ENCODE measurements at regions of chr6 and their contacts with region 1.

Region 1: DNA sequence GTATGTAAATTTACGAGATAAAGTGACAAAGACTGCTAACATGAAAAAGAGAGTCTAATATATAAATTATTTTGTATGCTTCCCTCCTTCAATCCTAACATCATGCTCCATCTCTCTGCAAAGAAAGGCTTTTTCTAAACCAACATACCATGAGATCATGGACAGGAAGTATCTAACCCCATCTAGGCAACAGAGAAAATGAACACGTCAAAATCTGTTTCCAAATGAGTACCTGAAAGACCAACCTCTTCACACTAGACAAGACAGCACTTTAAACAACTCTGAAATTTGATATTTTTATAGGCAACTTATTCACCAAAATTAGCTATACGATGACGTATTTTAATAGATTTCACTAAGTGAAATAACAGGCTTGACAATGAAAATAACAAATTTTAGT is 54.6 kb downstream of the MAN1A1 start:
- DNase-seq: no peak
- ATAC-seq: peak; percentile 91
- H3K4me3 Mint-ChIP-seq: no peak overlapping the region
- H3K27ac Mint-ChIP-seq: no peak overlapping the region
- H3K4me1 Mint-ChIP-seq: peaks cover 18% of the 10 kb centered on the region
- H3K27me3 Mint-ChIP-seq: no peaks in the 10 kb centered on the region

Region 2: GRCh38 chr6:119226089-119226488 is 68.9 kb before region 1 on chr6:
- CTCF ChIA-PET with region 1: no interaction called
- POLR2A ChIA-PET with region 1: no interaction called
- intact Hi-C with region 1: no loop called
- DNase-seq: no peak
- ATAC-seq: no peak
- H3K4me3 Mint-ChIP-seq: no peak overlapping the region
- H3K27ac Mint-ChIP-seq: no peak overlapping the region
- H3K4me1 Mint-ChIP-seq: no peaks in the 10 kb centered on the region
- H3K27me3 Mint-ChIP-seq: no peaks in the 10 kb centered on the region

Region 3: DNA sequence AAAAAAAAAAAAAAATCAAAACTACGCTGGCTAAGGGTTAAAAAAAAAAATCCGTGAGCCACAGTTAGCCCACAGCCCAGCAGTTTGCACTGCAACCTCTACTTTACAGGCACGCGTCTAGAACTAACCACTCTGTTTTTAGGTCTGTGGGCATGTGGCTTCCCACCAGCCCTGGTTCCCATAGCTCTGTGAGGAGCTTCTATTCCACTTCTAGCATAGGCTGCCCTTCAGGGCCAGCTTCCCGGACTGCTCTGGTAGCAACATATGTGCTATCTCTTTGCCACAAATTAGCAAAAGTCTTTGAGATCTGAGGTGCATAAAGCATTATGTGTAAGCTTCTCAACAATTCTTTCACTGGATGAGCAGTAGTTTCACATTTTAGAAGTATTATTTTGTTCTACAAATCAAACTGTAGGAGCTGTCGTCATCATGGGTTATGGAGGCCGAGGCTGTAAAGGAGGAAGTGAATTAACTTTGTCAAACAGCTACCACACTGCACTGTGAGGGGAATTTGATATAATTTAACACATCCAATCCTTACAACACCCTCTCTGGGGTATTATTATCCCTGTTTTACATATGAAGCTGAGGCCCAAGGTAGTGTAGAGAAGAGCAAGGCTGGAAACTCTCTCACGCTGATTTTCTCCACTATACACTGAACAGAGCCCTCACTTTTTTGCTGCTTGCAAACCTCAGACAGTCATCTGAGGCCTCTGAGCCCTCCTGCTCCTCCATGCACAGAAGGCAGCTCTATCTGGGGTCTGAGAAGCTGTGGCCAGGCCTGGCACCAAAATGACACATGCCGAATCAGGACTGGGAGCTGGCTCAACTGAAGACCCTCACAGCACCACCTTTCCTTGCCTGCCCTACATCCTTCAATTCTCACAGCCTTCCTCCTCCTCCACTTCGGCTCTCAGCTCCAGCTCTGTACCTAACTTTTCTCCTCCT is 19.2 kb after region 1 on chr6:
- CTCF ChIA-PET with region 1: interaction called, 4 read pairs
- POLR2A ChIA-PET with region 1: no interaction called
- intact Hi-C with region 1: loop called in 1 of 2 experiments (anchors 1 kb)
- DNase-seq: peak; percentile 60
- ATAC-seq: peak; percentile 73
- H3K4me3 Mint-ChIP-seq: peak overlapping the region; percentile 40
- H3K27ac Mint-ChIP-seq: peak overlapping the region; percentile 91
- H3K4me1 Mint-ChIP-seq: peaks cover 56% of the 10 kb centered on the region
- H3K27me3 Mint-ChIP-seq: no peaks in the 10 kb centered on the region